ENCODE measurements at regions of chr14 and their contacts with region 1.

Region 1: DNA sequence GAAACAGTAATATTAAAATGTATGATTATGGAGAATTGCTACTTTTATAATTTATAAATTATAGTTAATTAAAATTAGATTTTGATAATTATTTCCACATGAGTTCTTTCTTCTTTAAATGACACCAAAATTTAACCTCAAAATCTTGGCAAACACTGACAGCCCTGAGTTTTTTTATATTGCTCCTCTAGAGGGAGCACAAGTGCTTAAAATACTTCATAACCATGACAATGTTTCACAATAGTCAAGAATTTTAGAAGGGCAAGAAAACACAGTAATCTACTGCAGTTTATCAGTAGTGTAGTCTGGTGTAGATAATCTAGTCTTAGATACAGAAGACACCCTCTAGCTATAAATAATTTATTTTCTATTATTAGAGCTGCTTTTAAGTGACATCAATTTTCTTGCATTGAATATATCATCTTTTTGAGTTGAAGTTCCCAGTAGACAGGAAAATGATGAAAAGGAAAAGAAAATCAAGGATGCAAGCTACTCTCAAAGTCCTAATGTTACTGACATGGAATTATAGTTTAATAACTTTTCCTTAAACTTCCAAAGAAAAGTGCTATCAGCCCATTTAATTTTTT is 14.3 kb upstream of the PTGER2 start:
- DNase-seq: no peak
- H3K4me3 ChIP-seq: no peak overlapping the region
- H3K27ac ChIP-seq: no peak overlapping the region
- H3K4me1 ChIP-seq: no peaks in the 10 kb centered on the region
- H3K27me3 ChIP-seq: no peaks in the 10 kb centered on the region
- CTCF ChIP-seq: peak; percentile 49 to 59 (median 56)
- EP300 ChIP-seq: no peak
- POLR2A ChIP-seq: no peak

Region 2: DNA sequence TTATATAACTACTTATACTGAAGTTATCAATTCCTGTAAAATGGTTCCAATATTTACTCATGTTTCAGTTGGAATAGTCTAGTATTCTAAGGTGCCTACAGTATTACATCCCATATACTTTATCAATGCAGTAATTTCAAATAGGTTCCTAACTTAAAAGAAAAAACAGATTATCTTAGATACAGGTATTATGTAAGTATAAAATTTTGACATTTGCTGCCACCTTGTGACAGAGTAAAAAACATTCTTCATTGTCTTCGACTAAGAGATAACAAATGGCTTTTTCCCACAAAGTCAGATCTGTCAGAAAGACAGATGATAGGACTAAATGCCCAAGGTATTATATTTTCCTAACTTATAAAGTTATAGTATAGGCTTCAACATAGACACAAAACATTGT is 173.8 kb after region 1 on chr14:
- intact Hi-C with region 1: loop called (anchors 2 kb)
- DNase-seq: no peak
- H3K4me3 ChIP-seq: no peak overlapping the region
- H3K27ac ChIP-seq: no peak overlapping the region
- H3K4me1 ChIP-seq: no peaks in the 10 kb centered on the region
- H3K27me3 ChIP-seq: no peaks in the 10 kb centered on the region
- CTCF ChIP-seq: peak in 3 of 4 experiments; percentile 22 to 33 (median 28)
- EP300 ChIP-seq: no peak
- POLR2A ChIP-seq: no peak